ENCODE measurements at regions of chr2 and their contacts with region 1.

Region 1: GRCh38 chr2:46275973-46276372 is 21.2 kb upstream of the EPAS1 start:
- DNase-seq: peak; percentile 88
- ATAC-seq: peak; percentile 85 to 86

Region 2: DNA sequence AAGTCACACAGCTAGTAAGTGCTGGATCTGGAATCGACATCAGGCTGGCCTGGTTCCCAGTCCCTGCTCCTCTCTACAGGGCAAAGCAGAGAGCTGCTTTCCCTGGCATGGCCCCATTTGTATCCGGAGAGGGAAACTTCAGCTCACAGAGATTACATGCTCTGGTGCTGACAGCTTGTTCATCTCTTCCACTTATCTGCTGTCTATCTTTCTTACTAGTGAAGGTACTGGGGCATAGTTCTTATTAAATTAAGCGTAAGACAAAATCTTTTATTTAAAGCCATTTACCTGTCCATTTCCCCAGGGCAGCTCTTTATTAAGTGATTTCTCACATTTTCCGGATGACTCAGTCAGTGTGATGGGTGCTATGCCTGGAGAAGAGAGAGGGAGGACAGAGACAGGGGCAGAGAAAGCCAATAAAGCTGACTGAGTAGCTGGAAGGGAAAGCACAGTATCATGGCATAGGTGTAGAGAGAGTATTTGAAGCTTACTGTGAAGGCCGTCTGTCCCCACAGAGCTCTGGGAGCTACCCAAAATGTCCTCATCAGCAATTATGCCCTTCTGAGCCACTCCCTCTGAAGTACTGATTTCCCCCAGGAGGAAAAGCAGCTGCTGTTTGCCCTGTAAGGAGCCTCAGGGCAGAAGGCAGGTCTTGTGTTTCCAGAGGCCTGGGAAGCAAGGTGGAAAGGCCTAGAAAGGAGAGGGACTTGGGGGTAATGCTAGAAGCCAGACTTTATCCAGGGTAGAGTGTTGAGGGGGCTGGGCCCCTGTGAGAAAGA is 22.9 kb before region 1 on chr2:
- intact Hi-C with region 1: loop called in 1 of 2 experiments (anchors 1 kb)
- DNase-seq: peak; percentile 80
- ATAC-seq: peak; percentile 88 to 90

Region 3: GRCh38 chr2:46937471-46937901 is 661.5 kb after region 1 on chr2:
- intact Hi-C with region 1: no loop called
- DNase-seq: no peak
- ATAC-seq: no peak